GM12878 (cell line): ENCODE measurements at regions of chr4 and their contacts with region 1.

Region 1: GRCh38 chr4:113574636-113575103 is 186.9 kb downstream of the CAMK2D start:
- DNase-seq: no peak
- ATAC-seq: no peak
- H3K4me3 ChIP-seq: no peak overlapping the region
- H3K27ac ChIP-seq: no peak overlapping the region
- H3K4me1 ChIP-seq: no peaks in the 10 kb centered on the region
- H3K27me3 ChIP-seq: no peaks in the 10 kb centered on the region
- CTCF ChIP-seq: no peak
- EP300 ChIP-seq: no peak
- POLR2A ChIP-seq: no peak
- RAD21 ChIP-seq: no peak

Region 2: DNA sequence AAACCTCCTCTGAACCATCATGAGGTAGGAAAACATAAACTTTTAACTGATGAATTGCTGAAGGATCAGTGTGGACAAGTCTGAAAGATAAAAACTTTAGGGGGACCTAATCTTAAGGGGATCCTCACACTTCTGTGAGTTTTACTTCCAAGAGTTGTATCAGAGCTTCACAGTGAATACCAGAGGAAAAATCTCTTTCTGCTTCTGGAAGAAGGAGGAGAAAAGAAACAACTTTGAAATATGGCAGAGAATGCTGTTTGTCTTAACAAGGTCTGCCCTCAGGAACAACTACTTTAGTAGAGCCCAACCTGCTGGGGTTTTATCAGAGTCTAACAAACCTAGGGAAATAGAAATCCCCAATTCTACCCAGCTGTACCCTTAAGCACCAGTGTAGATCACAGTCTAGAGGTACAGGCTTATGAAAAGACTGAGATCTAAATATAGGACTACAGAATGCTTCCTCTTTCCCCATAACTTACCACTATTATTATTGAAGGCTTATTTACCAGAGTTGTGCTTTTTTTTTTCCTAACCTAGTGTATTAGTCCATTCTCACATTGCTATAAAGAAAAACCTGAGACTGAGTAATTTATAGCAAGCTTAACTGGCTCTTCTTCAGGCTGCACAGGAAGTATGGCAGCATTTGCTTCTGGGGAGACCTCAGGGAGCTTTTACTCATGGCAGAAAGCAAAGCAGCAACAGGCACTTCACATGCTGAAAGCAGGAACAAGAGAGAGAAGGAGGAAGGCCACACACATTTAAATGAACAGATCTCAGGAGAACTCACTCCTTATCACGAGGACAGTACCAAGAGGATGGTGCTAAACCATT is 18.9 kb after region 1 on chr4:
- CTCF ChIA-PET with region 1: interaction called, 7 read pairs
- POLR2A ChIA-PET with region 1: interaction called, 3 read pairs
- RAD21 ChIA-PET with region 1: no interaction called
- SMC1A ChIA-PET with region 1: interaction called, 64 read pairs
- in situ Hi-C with region 1: no loop called
- intact Hi-C with region 1: no loop called
- DNase-seq: peak; percentile 8
- ATAC-seq: peak; percentile 84
- H3K4me3 ChIP-seq: no peak overlapping the region
- H3K27ac ChIP-seq: no peak overlapping the region; the same call in 1 of the 2 replicates
- H3K4me1 ChIP-seq: peaks cover 10% of the 10 kb centered on the region; the same call in 1 of the 2 replicates
- H3K27me3 ChIP-seq: no peaks in the 10 kb centered on the region
- CTCF ChIP-seq: no peak
- EP300 ChIP-seq: no peak
- POLR2A ChIP-seq: no peak
- RAD21 ChIP-seq: no peak

Region 3: GRCh38 chr4:113820108-113820507 is 245.4 kb after region 1 on chr4:
- CTCF ChIA-PET with region 1: no interaction called
- POLR2A ChIA-PET with region 1: no interaction called
- RAD21 ChIA-PET with region 1: no interaction called
- SMC1A ChIA-PET with region 1: no interaction called
- in situ Hi-C with region 1: no loop called
- intact Hi-C with region 1: no loop called
- DNase-seq: no peak
- ATAC-seq: no peak
- H3K4me3 ChIP-seq: no peak overlapping the region
- H3K27ac ChIP-seq: no peak overlapping the region
- H3K4me1 ChIP-seq: peaks cover 28% of the 10 kb centered on the region
- H3K27me3 ChIP-seq: no peaks in the 10 kb centered on the region
- CTCF ChIP-seq: no peak
- EP300 ChIP-seq: no peak
- POLR2A ChIP-seq: no peak
- RAD21 ChIP-seq: no peak

Region 4: DNA sequence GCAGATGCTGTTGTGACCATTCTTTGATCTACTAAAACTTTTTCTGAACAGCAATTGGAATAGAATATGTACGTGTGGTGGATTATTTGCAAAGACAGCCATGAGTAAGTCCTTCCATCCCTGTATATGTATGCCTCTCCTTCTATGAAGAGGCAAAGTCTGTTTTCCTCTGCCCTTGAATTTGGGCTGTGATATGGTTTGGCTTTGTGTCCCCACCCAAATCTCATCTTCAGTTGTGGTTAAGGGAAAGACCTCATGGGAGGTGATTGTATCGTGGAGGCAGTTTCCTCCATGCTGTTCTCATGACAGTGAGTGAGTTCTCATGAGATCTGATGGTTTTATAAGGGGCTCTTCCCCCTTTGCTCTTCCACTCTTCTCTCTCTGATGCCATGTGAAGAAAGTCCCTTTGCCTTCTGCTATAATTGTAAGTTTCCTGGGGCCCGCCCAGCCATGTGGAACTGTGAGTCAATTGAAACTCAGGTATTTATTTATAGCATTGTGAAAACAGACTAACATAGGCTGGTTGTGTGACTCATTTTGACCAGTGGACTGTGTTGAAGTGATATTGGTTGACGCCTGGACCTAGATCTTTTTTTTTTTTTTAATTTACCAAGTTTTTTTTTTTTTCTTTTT is 295.2 kb after region 1 on chr4:
- CTCF ChIA-PET with region 1: no interaction called
- POLR2A ChIA-PET with region 1: no interaction called
- RAD21 ChIA-PET with region 1: no interaction called
- SMC1A ChIA-PET with region 1: no interaction called
- in situ Hi-C with region 1: no loop called
- intact Hi-C with region 1: no loop called
- DNase-seq: peak; percentile 54
- ATAC-seq: peak; percentile 97
- H3K4me3 ChIP-seq: no peak overlapping the region
- H3K27ac ChIP-seq: peak overlapping the region; percentile 66
- H3K4me1 ChIP-seq: peaks cover 3% of the 10 kb centered on the region; the same call in 1 of the 2 replicates
- H3K27me3 ChIP-seq: no peaks in the 10 kb centered on the region
- CTCF ChIP-seq: no peak
- EP300 ChIP-seq: no peak
- POLR2A ChIP-seq: no peak
- RAD21 ChIP-seq: no peak